Activated T-helper 2 cell treated with anti-CD3 and anti-CD28 coated beads, Interferon-gamma antibody, Interleukin-2, Interleukin-4, amounts not matched to agents 10 μg/mL and 5 μg/mL and 100 μg/mL, durations not matched to agents 14 hours and 24 hours and 36 hours (primary cell): ENCODE measurements at regions of chr16 and their contacts with region 1.

Region 1: GRCh38 chr16:19502395-19503131 is 19.3 kb downstream of the GDE1 start:
- DNase-seq: peak; percentile 41
- H3K4me3 Mint-ChIP-seq: no peak overlapping the region
- H3K27ac Mint-ChIP-seq: no peak overlapping the region
- H3K4me1 Mint-ChIP-seq: no peaks in the 10 kb centered on the region
- H3K27me3 Mint-ChIP-seq: no peaks in the 10 kb centered on the region

Region 2: GRCh38 chr16:19389246-19389645 is 113.3 kb before region 1 on chr16:
- intact Hi-C with region 1: loop called (anchors 1 kb)
- DNase-seq: peak; percentile 53
- H3K4me3 Mint-ChIP-seq: no peak overlapping the region
- H3K27ac Mint-ChIP-seq: no peak overlapping the region
- H3K4me1 Mint-ChIP-seq: peaks cover 21% of the 10 kb centered on the region
- H3K27me3 Mint-ChIP-seq: peaks cover 53% of the 10 kb centered on the region